Mammary epithelial cell (primary cell): ENCODE measurements at regions of chr19 and their contacts with region 1.

Region 1: GRCh38 chr19:17522988-17523872 is 11.8 kb downstream of the PGLS start:
- DNase-seq: no peak
- H3K4me3 ChIP-seq: no peak overlapping the region
- H3K27ac ChIP-seq: no peak overlapping the region
- H3K4me1 ChIP-seq: no peaks in the 10 kb centered on the region
- H3K27me3 ChIP-seq: no peaks in the 10 kb centered on the region
- CTCF ChIP-seq: no peak

Region 2: GRCh38 chr19:17359905-17360800 is 163.1 kb before region 1 on chr19:
- CTCF ChIA-PET with region 1: no interaction called
- dilution Hi-C with region 1: loop called (anchors 10 kb)
- in situ Hi-C with region 1: no loop called
- intact Hi-C with region 1: no loop called
- DNase-seq: no peak
- H3K4me3 ChIP-seq: no peak overlapping the region
- H3K27ac ChIP-seq: no peak overlapping the region
- H3K4me1 ChIP-seq: no peaks in the 10 kb centered on the region
- H3K27me3 ChIP-seq: no peaks in the 10 kb centered on the region
- CTCF ChIP-seq: no peak

Region 3: DNA sequence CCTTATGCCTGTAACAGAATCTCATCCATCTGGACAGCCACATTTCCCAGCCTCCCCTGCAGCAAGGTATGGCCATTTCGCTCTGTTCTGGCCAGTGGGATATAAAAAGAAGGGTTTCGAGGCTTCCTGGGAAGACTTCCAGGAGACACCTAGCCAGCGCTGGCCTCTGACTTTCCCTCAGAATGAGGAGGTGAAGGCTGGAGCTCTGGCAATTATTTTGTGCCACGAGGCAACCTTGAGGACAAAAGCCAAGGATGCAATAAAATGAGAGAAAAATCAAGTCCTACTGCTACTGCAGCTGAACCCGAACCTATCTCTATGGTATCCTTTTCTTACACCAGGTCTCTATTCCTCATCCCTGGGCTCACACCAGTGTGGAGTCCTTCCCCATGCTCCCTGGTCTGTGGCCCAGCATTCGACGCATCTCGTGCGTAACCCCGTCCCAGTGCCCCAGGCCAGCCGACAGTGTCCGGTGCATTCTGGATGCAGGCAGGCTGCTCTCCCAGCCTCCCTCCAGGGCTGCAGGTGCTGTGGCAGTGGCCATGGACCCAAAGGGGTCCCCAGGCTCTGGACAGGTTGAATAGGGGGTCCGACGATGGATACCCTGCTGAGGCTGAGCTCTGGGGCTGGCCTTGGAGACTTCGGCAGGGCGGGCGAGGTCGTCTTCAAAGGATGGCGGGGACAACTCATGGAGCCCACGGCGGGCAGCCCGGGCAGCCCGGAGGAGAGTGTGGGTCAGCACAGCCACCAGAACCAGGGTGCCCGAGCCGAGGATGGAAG is 86.9 kb before region 1 on chr19:
- CTCF ChIA-PET with region 1: no interaction called
- dilution Hi-C with region 1: no loop called
- in situ Hi-C with region 1: no loop called
- intact Hi-C with region 1: no loop called
- DNase-seq: no peak
- H3K4me3 ChIP-seq: no peak overlapping the region
- H3K27ac ChIP-seq: no peak overlapping the region
- H3K4me1 ChIP-seq: no peaks in the 10 kb centered on the region
- H3K27me3 ChIP-seq: no peaks in the 10 kb centered on the region
- CTCF ChIP-seq: no peak

Region 4: DNA sequence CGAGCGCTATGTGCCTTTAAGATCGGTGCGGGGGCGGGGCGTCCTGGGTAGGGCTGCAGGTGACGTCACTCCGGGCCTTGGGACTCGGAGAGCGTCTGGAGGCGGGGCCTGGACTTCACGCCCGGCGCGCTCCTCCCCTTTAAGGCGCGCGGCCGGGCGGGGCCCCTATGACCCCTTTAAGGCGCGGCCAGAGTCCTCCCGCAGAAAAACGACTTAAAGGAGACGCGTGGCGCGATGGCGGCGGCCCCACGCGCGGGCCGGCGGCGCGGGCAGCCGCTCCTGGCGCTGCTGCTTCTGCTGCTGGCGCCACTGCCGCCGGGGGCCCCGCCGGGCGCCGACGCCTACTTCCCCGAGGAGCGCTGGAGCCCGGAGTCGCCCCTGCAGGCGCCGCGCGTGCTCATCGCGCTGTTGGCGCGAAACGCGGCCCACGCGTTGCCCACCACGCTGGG is 32.3 kb after region 1 on chr19 and contains the start of gene COLGALT1:
- CTCF ChIA-PET with region 1: no interaction called
- dilution Hi-C with region 1: loop called (anchors 5 kb)
- in situ Hi-C with region 1: no loop called
- intact Hi-C with region 1: no loop called
- DNase-seq: peak; percentile 92
- H3K4me3 ChIP-seq: peak within 1 kb of the TSS; percentile 60 to 99 (median 95)
- H3K27ac ChIP-seq: peak within 1 kb of the TSS; percentile 60
- H3K4me1 ChIP-seq: peaks cover 9% of the 10 kb centered on the region
- H3K27me3 ChIP-seq: no peaks in the 10 kb centered on the region
- CTCF ChIP-seq: no peak
- total RNA-seq, gene COLGALT1: 74.2 to 92.5 TPM

Region 5: GRCh38 chr19:17695198-17695597 is 172.0 kb after region 1 on chr19:
- CTCF ChIA-PET with region 1: no interaction called
- dilution Hi-C with region 1: loop called (anchors 5 kb)
- in situ Hi-C with region 1: no loop called
- intact Hi-C with region 1: no loop called
- DNase-seq: no peak
- H3K4me3 ChIP-seq: no peak overlapping the region
- H3K27ac ChIP-seq: no peak overlapping the region
- H3K4me1 ChIP-seq: no peaks in the 10 kb centered on the region
- H3K27me3 ChIP-seq: no peaks in the 10 kb centered on the region
- CTCF ChIP-seq: no peak

Region 6: GRCh38 chr19:17775245-17775916 is 252.2 kb after region 1 on chr19:
- CTCF ChIA-PET with region 1: no interaction called
- dilution Hi-C with region 1: loop called (anchors 10 kb)
- in situ Hi-C with region 1: no loop called
- intact Hi-C with region 1: no loop called
- DNase-seq: no peak
- H3K4me3 ChIP-seq: no peak overlapping the region
- H3K27ac ChIP-seq: no peak overlapping the region
- H3K4me1 ChIP-seq: peaks cover 10% of the 10 kb centered on the region
- H3K27me3 ChIP-seq: no peaks in the 10 kb centered on the region
- CTCF ChIP-seq: peak; percentile 68 to 74